ENCODE measurements at regions of chr19 and their contacts with region 1.

Region 1: DNA sequence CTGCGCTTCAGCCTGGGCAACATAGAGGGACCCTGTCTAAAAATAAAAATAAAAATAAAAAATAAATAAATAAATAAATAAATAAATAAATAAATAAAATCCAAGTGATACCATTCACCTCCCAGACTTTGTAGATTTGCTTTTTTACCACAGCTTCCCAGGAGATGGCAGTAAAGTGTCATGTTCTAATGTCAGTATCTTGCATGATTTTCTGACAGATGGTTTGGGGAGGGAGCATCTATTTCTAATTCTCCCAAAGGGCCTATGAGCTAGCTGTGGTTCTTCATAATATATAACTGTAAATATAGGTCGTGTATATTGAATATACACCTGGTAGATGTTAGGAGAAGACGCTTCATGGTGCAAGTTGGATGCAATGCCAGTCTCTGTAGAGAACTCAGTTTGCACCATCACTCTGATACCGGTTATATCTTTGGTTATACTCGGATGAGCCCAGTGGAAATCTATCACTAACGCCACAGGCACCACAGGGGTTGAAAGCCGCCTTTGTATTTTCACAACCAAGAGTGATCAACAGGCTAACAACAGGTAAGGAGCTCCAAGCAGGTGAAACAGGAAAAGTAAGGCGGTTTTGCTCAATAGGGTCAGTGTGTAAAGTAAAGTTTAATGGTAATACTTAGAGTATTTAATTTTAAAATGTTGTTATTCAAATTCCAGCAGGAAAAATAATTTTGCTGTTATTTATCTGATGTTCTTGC is 13.9 kb downstream of the APLP1 start:
- DNase-seq: peak; percentile 84
- ATAC-seq: peak; percentile 63
- H3K4me3 ChIP-seq: no peak overlapping the region
- H3K4me3 Mint-ChIP-seq: no peak overlapping the region
- H3K27ac ChIP-seq: no peak overlapping the region
- H3K27ac Mint-ChIP-seq: peak overlapping the region; percentile 59
- H3K4me1 ChIP-seq: peaks cover 4 to 7% of the 10 kb centered on the region in 2 donors
- H3K4me1 Mint-ChIP-seq: peaks cover 17% of the 10 kb centered on the region
- H3K27me3 ChIP-seq: peaks cover 0 to 28% (median 12%) of the 10 kb centered on the region in 4 experiments
- H3K27me3 Mint-ChIP-seq: peaks cover 22% of the 10 kb centered on the region
- CTCF ChIP-seq: peak; percentile 80

Region 2: DNA sequence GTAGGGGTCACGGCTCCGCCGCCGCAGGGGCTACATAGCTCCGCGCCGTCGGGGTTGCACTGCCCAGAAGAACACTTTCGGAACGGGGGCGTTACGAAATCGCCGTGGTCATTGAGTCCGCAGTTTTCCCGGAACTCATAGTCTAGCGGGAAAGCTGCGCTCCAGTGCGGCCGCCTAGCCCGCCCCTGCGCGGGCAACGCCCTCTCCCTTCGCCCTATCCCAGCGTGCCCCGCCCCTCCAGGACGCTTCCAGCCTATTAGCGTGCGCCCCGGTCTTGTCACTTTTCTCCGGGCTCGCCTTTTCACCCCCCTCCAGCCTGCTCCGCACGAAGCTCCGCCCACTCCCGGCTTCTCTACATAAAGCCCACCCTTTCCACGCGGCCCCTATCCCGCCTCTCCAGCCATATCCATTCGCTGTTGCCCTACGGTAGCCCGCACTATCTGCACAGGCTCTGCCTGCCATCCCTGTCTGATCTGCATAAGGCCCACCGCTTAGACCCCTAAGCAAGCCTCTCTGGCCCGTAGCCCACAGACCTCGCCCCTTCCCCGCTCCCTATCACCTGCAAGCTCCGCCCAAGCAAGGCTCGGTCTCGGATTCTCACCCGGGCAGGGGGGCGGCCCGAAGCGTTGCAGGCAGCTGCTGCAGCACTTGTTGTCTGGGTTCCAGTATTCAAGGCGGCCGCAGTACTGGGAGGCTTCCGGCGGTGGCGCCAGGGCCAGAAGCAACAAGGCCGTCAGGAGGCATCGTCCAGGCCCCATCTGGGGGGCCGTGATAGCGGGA is 141.7 kb before region 1 on chr19:
- CTCF ChIA-PET with region 1: no interaction called
- POLR2A ChIA-PET with region 1: no interaction called
- intact Hi-C with region 1: no loop called
- DNase-seq: peak; percentile 95
- ATAC-seq: peak; percentile 64
- H3K4me3 ChIP-seq: peak overlapping the region; percentile 60 to 93 (median 83)
- H3K4me3 Mint-ChIP-seq: peak overlapping the region; percentile 96
- H3K27ac ChIP-seq: peak overlapping the region; percentile 59 to 73
- H3K27ac Mint-ChIP-seq: peak overlapping the region; percentile 92
- H3K4me1 ChIP-seq: peaks cover 34 to 64% of the 10 kb centered on the region in 2 donors
- H3K4me1 Mint-ChIP-seq: peaks cover 57% of the 10 kb centered on the region
- H3K27me3 ChIP-seq: no peaks in the 10 kb centered on the region
- H3K27me3 Mint-ChIP-seq: no peaks in the 10 kb centered on the region
- CTCF ChIP-seq: no peak

Region 3: DNA sequence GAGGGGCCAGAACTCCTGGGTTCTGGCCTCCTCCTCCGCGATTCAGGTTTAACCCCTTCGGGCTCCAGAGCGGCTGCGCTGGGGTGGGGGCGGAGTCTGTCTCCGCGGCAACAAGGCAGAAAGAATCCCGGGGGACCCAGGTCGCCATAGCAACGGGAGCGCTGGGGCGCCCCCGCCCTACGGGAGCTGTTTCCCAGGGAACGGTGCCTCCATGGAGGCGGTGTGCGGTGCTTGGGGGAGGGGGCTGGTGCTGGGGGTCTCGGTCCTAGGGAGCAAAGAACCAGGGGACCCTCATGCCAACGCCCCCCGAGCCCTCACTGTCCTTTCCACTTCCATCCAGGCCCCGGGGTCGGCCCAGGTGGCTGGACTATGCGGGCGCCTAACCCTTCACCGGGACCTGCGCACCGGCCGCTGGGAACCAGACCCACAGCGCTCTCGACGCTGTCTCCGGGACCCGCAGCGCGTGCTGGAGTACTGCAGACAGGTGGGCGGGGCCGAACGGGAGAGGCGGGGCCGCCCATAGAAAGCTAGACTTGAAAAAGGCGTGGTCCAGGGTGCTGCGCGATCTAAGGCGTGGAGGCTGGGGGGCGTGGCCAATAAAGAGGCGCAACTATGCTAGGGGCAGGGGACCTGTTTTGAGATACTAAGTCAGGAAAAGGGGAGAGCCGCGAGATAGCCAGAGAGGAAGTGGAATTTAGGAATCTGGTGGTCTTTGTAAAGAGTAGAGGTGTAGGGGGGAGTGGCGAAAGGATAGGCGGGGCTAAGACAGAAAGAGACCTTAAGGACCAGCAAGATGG is 12.7 kb before region 1 on chr19:
- CTCF ChIA-PET with region 1: no interaction called
- POLR2A ChIA-PET with region 1: no interaction called
- intact Hi-C with region 1: no loop called
- DNase-seq: peak; percentile 85
- ATAC-seq: peak; percentile 64
- H3K4me3 ChIP-seq: peak overlapping the region in 2 of 5 experiments; percentile 28 to 54
- H3K4me3 Mint-ChIP-seq: peak overlapping the region; percentile 72
- H3K27ac ChIP-seq: no peak overlapping the region
- H3K27ac Mint-ChIP-seq: no peak overlapping the region
- H3K4me1 ChIP-seq: peaks cover 23 to 25% of the 10 kb centered on the region in 2 donors
- H3K4me1 Mint-ChIP-seq: peaks cover 18% of the 10 kb centered on the region
- H3K27me3 ChIP-seq: peaks cover 0 to 76% (median 31%) of the 10 kb centered on the region in 4 experiments
- H3K27me3 Mint-ChIP-seq: peaks cover 61% of the 10 kb centered on the region
- CTCF ChIP-seq: no peak

Region 4: GRCh38 chr19:35899547-35900214 is 17.4 kb after region 1 on chr19:
- CTCF ChIA-PET with region 1: interaction called, 11 read pairs
- POLR2A ChIA-PET with region 1: interaction called, 9 read pairs
- intact Hi-C with region 1: loop called (anchors 1 kb)
- DNase-seq: peak; percentile 98
- ATAC-seq: peak; percentile 57
- H3K4me3 ChIP-seq: peak overlapping the region; percentile 74 to 100 (median 91)
- H3K4me3 Mint-ChIP-seq: peak overlapping the region; percentile 94
- H3K27ac ChIP-seq: peak overlapping the region; percentile 100
- H3K27ac Mint-ChIP-seq: peak overlapping the region; percentile 98
- H3K4me1 ChIP-seq: peaks cover 53 to 69% of the 10 kb centered on the region in 2 donors
- H3K4me1 Mint-ChIP-seq: peaks cover 64% of the 10 kb centered on the region
- H3K27me3 ChIP-seq: no peaks in the 10 kb centered on the region
- H3K27me3 Mint-ChIP-seq: no peaks in the 10 kb centered on the region
- CTCF ChIP-seq: no peak

Region 5: GRCh38 chr19:35925501-35925900 is 43.2 kb after region 1 on chr19:
- CTCF ChIA-PET with region 1: interaction called, 168 read pairs
- POLR2A ChIA-PET with region 1: interaction called, 12 read pairs
- intact Hi-C with region 1: no loop called
- DNase-seq: no peak
- ATAC-seq: no peak
- H3K4me3 ChIP-seq: no peak overlapping the region
- H3K4me3 Mint-ChIP-seq: no peak overlapping the region
- H3K27ac ChIP-seq: no peak overlapping the region
- H3K27ac Mint-ChIP-seq: peak overlapping the region; percentile 2
- H3K4me1 ChIP-seq: peaks cover 24 to 33% of the 10 kb centered on the region in 2 donors
- H3K4me1 Mint-ChIP-seq: peaks cover 32% of the 10 kb centered on the region
- H3K27me3 ChIP-seq: no peaks in the 10 kb centered on the region
- H3K27me3 Mint-ChIP-seq: no peaks in the 10 kb centered on the region
- CTCF ChIP-seq: no peak

Region 6: GRCh38 chr19:36169084-36169760 is 286.9 kb after region 1 on chr19:
- CTCF ChIA-PET with region 1: no interaction called
- POLR2A ChIA-PET with region 1: no interaction called
- intact Hi-C with region 1: loop called (anchors 2 kb)
- DNase-seq: no peak
- ATAC-seq: no peak
- H3K4me3 ChIP-seq: no peak overlapping the region
- H3K4me3 Mint-ChIP-seq: no peak overlapping the region
- H3K27ac ChIP-seq: no peak overlapping the region
- H3K27ac Mint-ChIP-seq: no peak overlapping the region
- H3K4me1 ChIP-seq: peaks cover 0 to 4% of the 10 kb centered on the region in 2 donors
- H3K4me1 Mint-ChIP-seq: peaks cover 4% of the 10 kb centered on the region
- H3K27me3 ChIP-seq: no peaks in the 10 kb centered on the region
- H3K27me3 Mint-ChIP-seq: no peaks in the 10 kb centered on the region
- CTCF ChIP-seq: no peak

Measured in B cell (primary cell).